Naive thymus-derived CD8-positive, alpha-beta T cell (primary cell): ENCODE measurements at regions of chr14 and their contacts with region 1.

Region 1: GRCh38 chr14:102316743-102317563 is 2.6 kb upstream of the ZNF839 start:
- DNase-seq: peak; percentile 89 to 98 (median 95)
- ATAC-seq: peak; percentile 63 to 66
- H3K4me3 Mint-ChIP-seq: peak overlapping the region; percentile 89 to 98 (median 95)
- H3K27ac Mint-ChIP-seq: peak overlapping the region; percentile 94 to 100 (median 98)
- H3K4me1 Mint-ChIP-seq: peaks cover 27 to 70% (median 69%) of the 10 kb centered on the region in 4 donors
- H3K27me3 Mint-ChIP-seq: peaks cover 0 to 3% (median 0%) of the 10 kb centered on the region in 5 donors

Region 2: DNA sequence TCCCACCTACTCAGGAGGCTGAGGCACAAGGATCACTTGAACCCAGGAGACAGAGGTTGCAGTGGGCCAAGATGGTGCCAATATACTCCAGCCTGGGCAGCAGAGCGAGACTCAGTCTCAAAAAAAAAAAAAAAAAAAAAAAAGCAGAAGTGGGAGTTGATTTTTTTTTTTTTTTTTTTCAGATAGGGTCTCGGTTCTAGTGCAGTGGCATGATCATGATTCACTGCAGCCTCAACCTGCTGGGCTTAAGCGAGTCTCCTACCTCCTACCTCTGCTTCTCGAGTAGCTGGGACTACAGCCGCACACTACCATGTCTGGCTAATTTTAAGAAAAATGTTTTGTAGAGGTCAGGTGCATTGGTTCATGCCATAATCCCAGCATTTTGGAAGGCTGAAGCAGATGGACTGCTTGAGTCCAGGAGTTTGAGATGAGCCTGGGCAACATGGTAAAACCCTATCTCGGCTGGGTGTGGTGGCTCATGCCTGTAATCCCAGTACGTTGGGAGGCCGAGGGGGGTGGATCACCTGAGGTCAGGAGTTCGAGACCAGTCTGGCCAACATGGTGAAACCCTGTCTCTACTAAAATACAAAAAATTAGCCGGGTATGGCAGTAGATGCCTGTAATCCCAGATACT is 213.8 kb before region 1 on chr14:
- POLR2A ChIA-PET with region 1: no interaction called
- DNase-seq: no peak
- ATAC-seq: no peak
- H3K4me3 Mint-ChIP-seq: no peak overlapping the region
- H3K27ac Mint-ChIP-seq: no peak overlapping the region
- H3K4me1 Mint-ChIP-seq: no peaks in the 10 kb centered on the region
- H3K27me3 Mint-ChIP-seq: no peaks in the 10 kb centered on the region

Region 3: DNA sequence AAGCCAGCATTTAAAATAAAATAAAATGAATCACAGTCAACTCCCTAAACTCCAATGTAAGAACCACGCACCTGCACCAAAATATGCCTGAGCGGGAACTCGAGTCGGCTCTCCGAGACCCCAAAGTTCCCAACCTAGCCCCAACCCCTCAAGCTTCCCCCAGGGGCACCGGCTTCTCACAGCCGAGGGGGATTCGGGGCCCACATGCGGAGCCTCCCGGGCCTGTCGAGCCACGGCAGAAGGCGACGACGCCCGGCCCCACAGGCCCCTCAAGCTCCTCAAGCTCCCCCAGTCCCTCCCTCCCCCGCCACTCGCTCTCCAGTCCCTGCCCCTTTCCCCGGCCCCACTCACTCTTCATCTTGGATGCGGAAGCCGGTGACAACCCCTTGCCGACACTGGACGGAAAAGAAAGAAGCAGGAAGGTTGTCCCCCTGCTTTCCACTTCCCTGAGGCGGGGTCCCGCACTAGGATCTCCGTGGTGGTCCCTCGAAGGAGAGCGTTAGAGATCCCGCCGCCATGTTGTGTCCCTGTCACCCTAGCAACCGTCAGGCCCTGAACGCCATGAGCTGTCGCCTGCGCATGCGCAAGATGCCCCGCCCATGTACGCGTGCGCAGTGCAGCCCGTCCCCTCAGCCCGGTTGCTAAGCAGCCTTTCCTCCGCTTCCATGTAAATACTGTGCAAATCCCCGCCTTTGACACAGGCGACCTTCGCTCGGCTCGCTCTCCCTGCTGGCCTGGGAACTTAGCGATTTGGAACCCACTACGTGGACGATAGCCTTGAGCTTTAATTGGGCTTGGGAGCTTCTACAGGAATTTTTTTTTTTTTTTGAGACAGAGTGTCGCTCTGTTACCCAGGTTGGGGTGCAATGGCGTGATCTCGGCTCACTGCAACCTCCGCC is 12.1 kb before region 1 on chr14 and contains the start of gene MOK:
- POLR2A ChIA-PET with region 1: interaction called, 17 read pairs
- DNase-seq: peak; percentile 93 to 99 (median 98)
- ATAC-seq: peak; percentile 84 to 90
- H3K4me3 Mint-ChIP-seq: peak within 1 kb of the TSS; percentile 88 to 97 (median 96)
- H3K27ac Mint-ChIP-seq: peak within 1 kb of the TSS; percentile 94 to 99 (median 99)
- H3K4me1 Mint-ChIP-seq: peaks cover 6 to 13% (median 11%) of the 10 kb centered on the region in 4 donors
- H3K27me3 Mint-ChIP-seq: peaks cover 0 to 4% (median 0%) of the 10 kb centered on the region in 5 donors
- polyA plus RNA-seq, gene MOK: 1.1 to 2.7 (median 1.8) TPM

Region 4: GRCh38 chr14:102370305-102370809 is 53.4 kb after region 1 on chr14:
- POLR2A ChIA-PET with region 1: no interaction called
- DNase-seq: no peak
- ATAC-seq: no peak
- H3K4me3 Mint-ChIP-seq: peak overlapping the region in 1 of 10 donors; percentile 5
- H3K27ac Mint-ChIP-seq: peak overlapping the region in 4 of 10 donors; percentile 41 to 79 (median 56)
- H3K4me1 Mint-ChIP-seq: peaks cover 17 to 32% (median 22%) of the 10 kb centered on the region in 4 donors
- H3K27me3 Mint-ChIP-seq: no peaks in the 10 kb centered on the region